WTC11 (cell line): ENCODE measurements at regions of chr6 and their contacts with region 1.

Region 1: DNA sequence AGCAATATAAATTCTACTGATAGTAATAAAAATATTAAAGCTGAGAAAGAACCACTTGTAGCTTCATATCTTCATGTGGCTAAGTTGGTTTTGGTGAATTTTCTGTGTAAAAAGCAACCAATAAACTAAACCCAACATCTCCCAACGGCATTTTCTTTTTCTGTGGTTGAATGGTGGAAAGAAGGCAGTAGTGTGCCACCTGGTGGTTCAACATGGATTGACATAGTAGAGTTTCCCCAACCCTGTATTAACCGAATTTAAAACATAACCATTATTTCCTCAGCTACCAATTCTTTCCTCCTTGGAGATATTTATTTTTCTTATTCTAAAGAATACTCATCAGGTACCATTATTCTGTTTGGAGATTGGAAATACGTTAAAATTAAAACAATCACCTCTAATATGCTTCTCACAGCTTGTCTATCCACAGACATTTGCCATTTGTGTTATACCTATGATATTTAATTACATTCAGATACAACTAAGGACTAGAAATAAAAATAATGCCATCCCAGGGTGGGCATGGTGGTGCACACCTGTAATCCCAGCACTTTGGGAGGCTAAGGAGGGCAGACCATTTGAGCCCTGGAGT is 117.1 kb upstream of the EEF1E1 start:
- DNase-seq: peak; percentile 30
- ATAC-seq: no peak; the same call in 1 of the 2 replicates
- H3K4me3 Mint-ChIP-seq: no peak overlapping the region
- H3K27ac Mint-ChIP-seq: no peak overlapping the region
- H3K4me1 Mint-ChIP-seq: no peaks in the 10 kb centered on the region
- H3K27me3 Mint-ChIP-seq: no peaks in the 10 kb centered on the region
- CTCF ChIP-seq: peak; percentile 65

Region 2: GRCh38 chr6:8059129-8059528 is 160.3 kb before region 1 on chr6:
- CTCF ChIA-PET with region 1: no interaction called
- POLR2A ChIA-PET with region 1: no interaction called
- DNase-seq: no peak
- ATAC-seq: no peak
- H3K4me3 Mint-ChIP-seq: no peak overlapping the region
- H3K27ac Mint-ChIP-seq: no peak overlapping the region
- H3K4me1 Mint-ChIP-seq: peaks cover 6% of the 10 kb centered on the region
- H3K27me3 Mint-ChIP-seq: no peaks in the 10 kb centered on the region
- CTCF ChIP-seq: no peak

Region 3: DNA sequence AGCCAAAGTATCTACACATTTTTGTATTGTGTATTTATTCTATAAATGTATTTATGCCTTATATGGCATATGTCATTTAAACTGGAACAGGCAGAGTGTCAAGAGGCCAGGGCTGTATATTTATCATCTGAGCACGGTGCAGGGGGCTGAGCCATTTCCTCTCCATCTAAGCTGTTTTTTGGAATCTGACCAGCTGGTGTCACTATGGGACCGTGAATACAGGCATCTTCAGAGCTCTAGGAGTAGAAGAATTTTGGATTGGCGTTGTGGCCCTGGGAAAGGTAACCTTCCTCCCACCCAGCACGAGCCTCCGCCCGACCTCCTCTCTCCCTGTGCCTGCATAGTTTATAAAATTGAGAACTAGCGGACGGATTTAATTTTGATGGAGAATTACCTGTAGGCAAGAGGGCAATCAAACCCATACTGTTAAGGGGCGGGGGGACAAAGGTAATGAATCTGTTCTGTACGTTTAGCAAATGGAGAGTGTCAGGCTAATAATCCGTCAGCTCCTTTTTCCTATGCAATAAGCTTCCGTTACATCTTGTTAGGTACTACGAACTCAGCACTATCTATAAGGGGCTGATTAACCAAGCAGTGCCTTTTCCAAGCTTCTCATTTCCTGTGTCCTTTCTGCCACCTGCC is 88.1 kb before region 1 on chr6:
- CTCF ChIA-PET with region 1: interaction called, 149 read pairs
- POLR2A ChIA-PET with region 1: interaction called, 4 read pairs
- DNase-seq: peak; percentile 65
- ATAC-seq: peak; percentile 97
- H3K4me3 Mint-ChIP-seq: 0 out of 2 replicates have a peak overlapping the region, but pooled peaks have one; percentile 11
- H3K27ac Mint-ChIP-seq: no peak overlapping the region
- H3K4me1 Mint-ChIP-seq: no peaks in the 10 kb centered on the region; the same call in 1 of the 2 replicates
- H3K27me3 Mint-ChIP-seq: no peaks in the 10 kb centered on the region
- CTCF ChIP-seq: peak; percentile 48

Region 4: GRCh38 chr6:8155259-8156012 is 64.0 kb before region 1 on chr6:
- CTCF ChIA-PET with region 1: interaction called, 10 read pairs
- POLR2A ChIA-PET with region 1: no interaction called
- DNase-seq: no peak
- ATAC-seq: peak; percentile 81
- H3K4me3 Mint-ChIP-seq: no peak overlapping the region
- H3K27ac Mint-ChIP-seq: no peak overlapping the region
- H3K4me1 Mint-ChIP-seq: peaks cover 27% of the 10 kb centered on the region
- H3K27me3 Mint-ChIP-seq: no peaks in the 10 kb centered on the region
- CTCF ChIP-seq: no peak

Region 5: DNA sequence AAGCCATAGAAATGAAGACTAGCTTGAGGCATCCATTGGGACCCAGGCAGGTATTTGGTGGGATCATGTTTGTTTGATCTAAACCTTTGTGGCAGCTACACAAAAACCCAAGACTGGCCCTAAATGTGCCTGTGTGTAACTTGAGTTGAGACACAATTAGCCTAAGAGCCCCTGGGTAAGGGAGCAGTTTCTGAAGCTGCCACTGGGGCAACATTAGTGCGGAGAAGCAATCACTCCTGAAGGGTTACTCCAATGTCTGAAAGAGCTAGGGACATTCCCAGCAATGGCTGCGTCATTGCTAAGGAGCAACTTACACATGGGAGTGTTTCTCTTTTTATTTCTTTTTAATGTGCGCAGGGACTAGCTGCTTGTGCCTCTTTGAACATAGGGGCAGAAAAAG is 49.2 kb before region 1 on chr6:
- CTCF ChIA-PET with region 1: interaction called, 19 read pairs
- POLR2A ChIA-PET with region 1: no interaction called
- DNase-seq: peak; percentile 27
- ATAC-seq: peak; percentile 95
- H3K4me3 Mint-ChIP-seq: no peak overlapping the region
- H3K27ac Mint-ChIP-seq: no peak overlapping the region; the same call in 1 of the 2 replicates
- H3K4me1 Mint-ChIP-seq: 0 out of 2 replicates have a peak, but pooled peaks cover 3% of the 10 kb centered on the region
- H3K27me3 Mint-ChIP-seq: no peaks in the 10 kb centered on the region; the same call in 1 of the 2 replicates
- CTCF ChIP-seq: no peak

Region 6: DNA sequence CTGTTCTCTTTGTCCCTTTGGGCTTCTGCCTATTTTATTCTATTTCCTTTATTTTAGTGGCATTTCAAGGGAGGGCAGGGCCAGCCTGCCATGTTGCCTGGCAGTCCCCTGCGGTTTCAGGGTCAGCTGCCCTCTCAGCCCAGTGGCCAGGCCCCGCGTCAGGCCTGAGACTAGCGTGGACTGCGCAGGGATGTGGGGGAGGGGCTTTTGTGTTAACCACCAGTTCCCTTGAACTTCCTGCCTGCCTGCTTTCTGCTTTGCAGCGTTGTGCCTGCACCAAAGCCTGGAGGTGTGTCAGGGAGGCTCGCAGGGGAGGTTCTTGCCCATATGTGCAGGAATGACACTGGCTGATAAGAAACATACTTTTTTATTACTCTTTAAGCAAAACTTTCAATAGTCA is 58.3 kb after region 1 on chr6:
- CTCF ChIA-PET with region 1: no interaction called
- POLR2A ChIA-PET with region 1: no interaction called
- DNase-seq: peak; percentile 26
- ATAC-seq: peak; percentile 73
- H3K4me3 Mint-ChIP-seq: no peak overlapping the region
- H3K27ac Mint-ChIP-seq: no peak overlapping the region
- H3K4me1 Mint-ChIP-seq: peaks cover 49% of the 10 kb centered on the region
- H3K27me3 Mint-ChIP-seq: no peaks in the 10 kb centered on the region
- CTCF ChIP-seq: no peak